Lower lobe of right lung (tissue), 2 donors: ENCODE measurements at regions of chr2 and their contacts with region 1.

Region 1: DNA sequence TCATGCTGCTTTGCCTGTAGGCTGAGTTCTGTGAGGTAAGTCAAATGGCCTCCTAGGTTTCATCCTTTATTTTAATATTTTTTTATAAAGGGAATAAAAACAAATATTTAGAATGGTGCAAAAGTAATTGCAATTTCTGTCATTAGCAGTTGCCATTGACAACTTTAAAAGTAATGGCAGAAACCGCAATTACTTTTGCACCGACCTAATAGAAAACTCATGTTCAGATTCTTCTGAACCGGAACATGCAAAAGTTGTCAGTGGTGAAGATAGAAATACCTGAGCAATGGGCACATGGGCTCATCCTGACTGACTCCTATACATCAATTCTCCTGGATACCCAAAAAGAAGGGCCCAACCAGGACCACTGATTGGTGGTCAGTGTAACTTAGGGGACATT is 607.5 kb upstream of the KLHL29 start:
- DNase-seq: no peak
- ATAC-seq: no peak
- H3K4me3 ChIP-seq: no peak overlapping the region
- H3K27ac ChIP-seq: no peak overlapping the region
- H3K4me1 ChIP-seq: no peaks in the 10 kb centered on the region
- H3K27me3 ChIP-seq: no peaks in the 10 kb centered on the region
- CTCF ChIP-seq: no peak

Region 2: GRCh38 chr2:22329211-22330154 is 448.0 kb before region 1 on chr2:
- intact Hi-C with region 1: loop called (anchors 5 kb)
- DNase-seq: no peak
- ATAC-seq: no peak
- H3K4me3 ChIP-seq: no peak overlapping the region
- H3K27ac ChIP-seq: no peak overlapping the region
- H3K4me1 ChIP-seq: no peaks in the 10 kb centered on the region
- H3K27me3 ChIP-seq: no peaks in the 10 kb centered on the region
- CTCF ChIP-seq: no peak

Region 3: GRCh38 chr2:22855761-22856184 is 78.3 kb after region 1 on chr2:
- intact Hi-C with region 1: no loop called
- DNase-seq: no peak
- ATAC-seq: no peak
- H3K4me3 ChIP-seq: no peak overlapping the region
- H3K27ac ChIP-seq: no peak overlapping the region
- H3K4me1 ChIP-seq: no peaks in the 10 kb centered on the region
- H3K27me3 ChIP-seq: no peaks in the 10 kb centered on the region
- CTCF ChIP-seq: no peak